Mammary epithelial cell (primary cell): ENCODE measurements at regions of chr1 and their contacts with region 1.

Region 1: GRCh38 chr1:6052543-6053205 is 7.0 kb downstream of the KCNAB2 start:
- DNase-seq: peak; percentile 46
- H3K4me3 ChIP-seq: no peak overlapping the region
- H3K27ac ChIP-seq: no peak overlapping the region
- H3K4me1 ChIP-seq: no peaks in the 10 kb centered on the region
- H3K27me3 ChIP-seq: no peaks in the 10 kb centered on the region
- CTCF ChIP-seq: peak; percentile 57 to 64

Region 2: GRCh38 chr1:6080469-6080868 is 27.8 kb after region 1 on chr1:
- CTCF ChIA-PET with region 1: no interaction called
- dilution Hi-C with region 1: no loop called
- in situ Hi-C with region 1: no loop called
- intact Hi-C with region 1: loop called (anchors 1 kb)
- DNase-seq: peak; percentile 12
- H3K4me3 ChIP-seq: no peak overlapping the region
- H3K27ac ChIP-seq: no peak overlapping the region
- H3K4me1 ChIP-seq: no peaks in the 10 kb centered on the region
- H3K27me3 ChIP-seq: no peaks in the 10 kb centered on the region
- CTCF ChIP-seq: peak; percentile 31 to 60

Region 3: GRCh38 chr1:6099787-6100765 is 47.4 kb after region 1 on chr1:
- CTCF ChIA-PET with region 1: no interaction called
- dilution Hi-C with region 1: no loop called
- in situ Hi-C with region 1: no loop called
- intact Hi-C with region 1: loop called (anchors 1 kb)
- DNase-seq: no peak
- H3K4me3 ChIP-seq: no peak overlapping the region
- H3K27ac ChIP-seq: no peak overlapping the region
- H3K4me1 ChIP-seq: no peaks in the 10 kb centered on the region
- H3K27me3 ChIP-seq: no peaks in the 10 kb centered on the region
- CTCF ChIP-seq: peak; percentile 11 to 50

Region 4: GRCh38 chr1:6171548-6172119 is 119.0 kb after region 1 on chr1:
- CTCF ChIA-PET with region 1: no interaction called
- dilution Hi-C with region 1: no loop called
- in situ Hi-C with region 1: no loop called
- intact Hi-C with region 1: loop called (anchors 2 kb)
- DNase-seq: no peak
- H3K4me3 ChIP-seq: no peak overlapping the region
- H3K27ac ChIP-seq: no peak overlapping the region
- H3K4me1 ChIP-seq: peaks cover 4% of the 10 kb centered on the region
- H3K27me3 ChIP-seq: peaks cover 1% of the 10 kb centered on the region
- CTCF ChIP-seq: peak; percentile 22 to 57

Region 5: DNA sequence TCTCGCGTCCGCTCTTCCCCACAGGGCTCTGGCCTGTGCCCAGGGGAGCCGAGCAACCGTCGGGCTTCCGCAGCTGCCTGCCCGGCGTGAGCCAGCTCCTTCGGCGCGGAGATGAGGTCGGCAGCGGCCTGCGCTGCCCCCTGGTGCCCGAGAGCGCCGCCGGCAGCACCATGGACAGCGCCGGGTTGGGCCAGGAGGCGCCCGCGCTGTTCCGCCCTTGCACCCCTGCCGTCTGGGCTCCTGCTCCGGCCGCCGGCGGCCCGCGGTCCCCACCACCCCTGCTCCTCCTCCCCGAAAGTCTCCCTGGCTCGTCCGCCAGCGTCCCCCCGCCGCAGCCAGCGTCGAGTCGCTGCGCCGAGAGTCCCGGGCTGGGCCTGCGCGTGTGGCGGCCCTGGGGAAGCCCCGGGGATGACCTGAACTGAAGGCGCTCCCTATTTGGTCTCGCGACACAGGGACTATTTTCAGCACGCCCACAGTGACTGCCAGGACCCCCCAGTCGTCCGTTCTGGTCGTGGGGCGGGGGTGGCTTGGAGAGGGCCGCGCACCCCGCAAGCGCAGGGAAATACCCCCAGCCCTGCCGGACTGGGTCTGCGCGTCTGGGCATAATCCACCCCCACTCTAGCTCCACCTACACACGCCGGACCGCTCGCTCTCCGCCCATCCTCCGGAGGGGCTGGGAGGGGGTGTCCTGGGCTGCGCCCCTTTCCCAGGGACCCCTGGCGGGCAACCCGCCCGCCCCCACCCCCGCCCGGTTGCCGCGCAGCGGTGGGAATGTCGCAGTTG is 192.6 kb after region 1 on chr1:
- CTCF ChIA-PET with region 1: interaction called, 14 read pairs
- dilution Hi-C with region 1: no loop called
- in situ Hi-C with region 1: no loop called
- intact Hi-C with region 1: loop called (anchors 1 kb)
- DNase-seq: peak; percentile 77
- H3K4me3 ChIP-seq: peak overlapping the region; percentile 30 to 39 (median 33)
- H3K27ac ChIP-seq: no peak overlapping the region
- H3K4me1 ChIP-seq: peaks cover 18% of the 10 kb centered on the region
- H3K27me3 ChIP-seq: peaks cover 20% of the 10 kb centered on the region
- CTCF ChIP-seq: peak; percentile 71 to 93

Region 6: DNA sequence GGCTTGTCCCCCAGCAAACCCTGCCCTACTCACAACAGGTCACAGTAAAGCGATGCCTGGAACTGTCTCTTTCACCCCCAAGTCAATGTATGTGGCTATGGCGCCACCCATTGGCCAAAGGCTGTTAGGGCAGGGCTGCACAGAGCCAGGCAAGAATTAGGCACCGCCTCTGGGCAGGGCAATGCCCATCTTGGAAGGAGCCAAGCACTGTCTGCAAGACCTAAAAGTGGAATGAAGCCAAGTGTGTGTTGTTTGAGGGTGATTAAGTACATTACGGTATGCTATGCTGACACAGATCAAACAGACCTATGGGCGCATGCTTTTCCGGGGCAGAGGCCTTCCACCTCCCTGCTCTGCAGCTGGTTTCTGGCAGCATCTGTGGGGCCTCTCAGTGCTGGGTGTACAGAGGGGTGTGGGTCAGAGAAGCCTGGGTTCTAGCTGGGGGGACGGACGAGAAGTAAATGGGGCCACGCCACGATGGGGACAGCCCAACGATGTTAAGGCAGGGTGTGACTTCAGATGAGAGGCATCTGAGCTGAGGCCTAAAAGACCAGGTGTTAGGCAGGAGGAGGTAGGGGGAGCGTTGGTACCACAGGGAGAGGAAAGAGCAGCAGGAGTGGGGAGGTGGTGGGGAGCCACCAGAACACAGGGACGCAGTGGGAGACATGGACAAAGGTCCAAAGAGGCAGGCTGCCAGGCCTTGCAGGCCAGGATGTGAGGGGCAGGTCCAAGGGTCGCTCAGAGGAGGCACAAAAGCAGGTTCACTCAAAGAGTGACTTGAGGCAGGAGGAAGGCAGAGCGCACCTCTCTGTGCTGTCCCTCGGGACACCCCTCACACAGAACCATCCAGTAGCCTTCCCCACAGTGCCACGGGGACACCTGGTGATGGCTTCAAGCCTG is 291.1 kb after region 1 on chr1:
- CTCF ChIA-PET with region 1: no interaction called
- dilution Hi-C with region 1: no loop called
- in situ Hi-C with region 1: loop called in 1 of 2 experiments (anchors 25 kb)
- intact Hi-C with region 1: loop called (anchors 5 kb)
- DNase-seq: peak; percentile 94
- H3K4me3 ChIP-seq: no peak overlapping the region
- H3K27ac ChIP-seq: no peak overlapping the region
- H3K4me1 ChIP-seq: peaks cover 33% of the 10 kb centered on the region
- H3K27me3 ChIP-seq: no peaks in the 10 kb centered on the region
- CTCF ChIP-seq: peak; percentile 97 to 100